IMR-90 (cell line): ENCODE measurements at regions of chr12 and their contacts with region 1.

Region 1: GRCh38 chr12:114903083-114903691 is 219.2 kb upstream of the TBX3 start:
- DNase-seq: peak; percentile 96
- ATAC-seq: peak; percentile 91
- H3K4me3 ChIP-seq: peak overlapping the region; percentile 16
- H3K27ac ChIP-seq: peak overlapping the region; percentile 36
- H3K4me1 ChIP-seq: peaks cover 10% of the 10 kb centered on the region
- H3K27me3 ChIP-seq: no peaks in the 10 kb centered on the region
- CTCF ChIP-seq: no peak
- POLR2A ChIP-seq: peak; percentile 87
- RAD21 ChIP-seq: peak; percentile 37

Region 2: DNA sequence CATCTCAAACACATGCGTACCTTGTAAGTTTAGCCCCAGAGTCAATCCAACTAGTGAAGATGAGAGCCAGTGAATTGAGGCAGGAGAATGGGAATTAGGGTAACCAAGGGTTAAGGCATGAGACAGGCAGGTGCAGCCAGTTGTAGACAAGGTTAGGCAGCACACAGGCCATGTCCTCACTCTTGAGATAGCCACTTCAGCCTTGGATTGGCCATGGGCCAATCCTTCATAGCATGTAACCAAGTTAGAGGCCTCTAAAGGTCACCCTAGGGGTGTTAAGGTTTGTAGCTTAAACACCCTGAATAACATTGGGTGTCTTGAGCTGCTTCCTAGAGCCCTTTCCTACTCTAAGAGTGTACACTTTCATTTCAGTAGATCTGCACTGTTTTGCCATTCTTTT is 728.9 kb before region 1 on chr12:
- CTCF ChIA-PET with region 1: no interaction called
- POLR2A ChIA-PET with region 1: no interaction called
- dilution Hi-C with region 1: no loop called
- in situ Hi-C with region 1: no loop called
- intact Hi-C with region 1: no loop called
- DNase-seq: no peak
- ATAC-seq: no peak
- H3K4me3 ChIP-seq: no peak overlapping the region
- H3K27ac ChIP-seq: no peak overlapping the region
- H3K4me1 ChIP-seq: no peaks in the 10 kb centered on the region
- H3K27me3 ChIP-seq: no peaks in the 10 kb centered on the region; the same call in 1 of the 2 replicates
- CTCF ChIP-seq: no peak
- POLR2A ChIP-seq: no peak
- RAD21 ChIP-seq: no peak

Region 3: GRCh38 chr12:114414031-114414865 is 488.9 kb before region 1 on chr12:
- CTCF ChIA-PET with region 1: interaction called, 12 read pairs
- POLR2A ChIA-PET with region 1: no interaction called
- dilution Hi-C with region 1: no loop called
- in situ Hi-C with region 1: no loop called
- intact Hi-C with region 1: no loop called
- DNase-seq: peak; percentile 46
- ATAC-seq: peak; percentile 43
- H3K4me3 ChIP-seq: peak overlapping the region; percentile 37
- H3K27ac ChIP-seq: peak overlapping the region; percentile 100
- H3K4me1 ChIP-seq: peaks cover 30% of the 10 kb centered on the region
- H3K27me3 ChIP-seq: no peaks in the 10 kb centered on the region
- CTCF ChIP-seq: no peak
- POLR2A ChIP-seq: no peak
- RAD21 ChIP-seq: no peak

Region 4: DNA sequence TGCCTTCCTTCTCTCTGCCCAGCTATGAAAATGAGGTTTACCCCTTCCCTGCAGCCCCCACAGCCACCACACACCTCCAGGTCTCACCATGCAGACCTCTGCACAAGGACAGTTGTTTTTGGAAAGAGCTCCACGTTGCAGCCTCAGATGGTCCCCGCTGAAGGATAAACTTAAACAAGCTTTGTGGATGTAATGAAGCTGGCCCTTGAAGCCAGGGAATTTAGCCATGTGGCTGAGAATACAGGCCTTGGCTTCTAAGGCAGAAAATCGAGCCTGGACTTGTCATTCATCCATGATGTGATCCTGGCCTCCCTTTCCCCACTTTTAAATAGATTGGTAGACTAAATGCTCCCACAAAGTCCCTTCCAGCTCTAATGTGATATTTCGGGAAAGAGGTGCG is 298.6 kb before region 1 on chr12:
- CTCF ChIA-PET with region 1: interaction called, 10 read pairs
- POLR2A ChIA-PET with region 1: no interaction called
- dilution Hi-C with region 1: no loop called
- in situ Hi-C with region 1: no loop called
- intact Hi-C with region 1: no loop called
- DNase-seq: no peak
- ATAC-seq: peak; percentile 44
- H3K4me3 ChIP-seq: no peak overlapping the region
- H3K27ac ChIP-seq: no peak overlapping the region
- H3K4me1 ChIP-seq: peaks cover 1% of the 10 kb centered on the region; the same call in 1 of the 2 replicates
- H3K27me3 ChIP-seq: peaks cover 3% of the 10 kb centered on the region
- CTCF ChIP-seq: no peak
- POLR2A ChIP-seq: no peak
- RAD21 ChIP-seq: no peak

Region 5: GRCh38 chr12:114762490-114763110 is 140.6 kb before region 1 on chr12:
- CTCF ChIA-PET with region 1: no interaction called
- POLR2A ChIA-PET with region 1: no interaction called
- dilution Hi-C with region 1: no loop called
- in situ Hi-C with region 1: no loop called
- intact Hi-C with region 1: loop called (anchors 10 kb)
- DNase-seq: peak; percentile 95
- ATAC-seq: peak; percentile 87
- H3K4me3 ChIP-seq: no peak overlapping the region; the same call in 1 of the 2 replicates
- H3K27ac ChIP-seq: peak overlapping the region; percentile 87
- H3K4me1 ChIP-seq: peaks cover 6% of the 10 kb centered on the region
- H3K27me3 ChIP-seq: no peaks in the 10 kb centered on the region
- CTCF ChIP-seq: no peak
- POLR2A ChIP-seq: no peak
- RAD21 ChIP-seq: no peak; the same call in 1 of the 2 replicates

Region 6: GRCh38 chr12:115149685-115150378 is 246.6 kb after region 1 on chr12:
- CTCF ChIA-PET with region 1: no interaction called
- POLR2A ChIA-PET with region 1: no interaction called
- dilution Hi-C with region 1: no loop called
- in situ Hi-C with region 1: no loop called
- intact Hi-C with region 1: loop called (anchors 10 kb)
- DNase-seq: peak; percentile 99
- ATAC-seq: peak; percentile 97
- H3K4me3 ChIP-seq: peak overlapping the region; percentile 23; the same call in 1 of the 2 replicates
- H3K27ac ChIP-seq: peak overlapping the region; percentile 93
- H3K4me1 ChIP-seq: peaks cover 3% of the 10 kb centered on the region
- H3K27me3 ChIP-seq: no peaks in the 10 kb centered on the region
- CTCF ChIP-seq: no peak
- POLR2A ChIP-seq: peak; percentile 69; the same call in 1 of the 2 replicates
- RAD21 ChIP-seq: peak; percentile 34; the same call in 1 of the 2 replicates